GM12878 (cell line): ENCODE measurements at regions of chr13 and their contacts with region 1.

Region 1: GRCh38 chr13:43054803-43055802 is 31.7 kb downstream of the DNAJC15 start:
- DNase-seq: no peak
- ATAC-seq: peak; percentile 56
- H3K4me3 ChIP-seq: peak overlapping the region; percentile 74
- H3K27ac ChIP-seq: peak overlapping the region; percentile 71
- H3K4me1 ChIP-seq: peaks cover 25% of the 10 kb centered on the region
- H3K27me3 ChIP-seq: no peaks in the 10 kb centered on the region
- CTCF ChIP-seq: no peak
- EP300 ChIP-seq: no peak
- POLR2A ChIP-seq: no peak
- RAD21 ChIP-seq: no peak

Region 2: DNA sequence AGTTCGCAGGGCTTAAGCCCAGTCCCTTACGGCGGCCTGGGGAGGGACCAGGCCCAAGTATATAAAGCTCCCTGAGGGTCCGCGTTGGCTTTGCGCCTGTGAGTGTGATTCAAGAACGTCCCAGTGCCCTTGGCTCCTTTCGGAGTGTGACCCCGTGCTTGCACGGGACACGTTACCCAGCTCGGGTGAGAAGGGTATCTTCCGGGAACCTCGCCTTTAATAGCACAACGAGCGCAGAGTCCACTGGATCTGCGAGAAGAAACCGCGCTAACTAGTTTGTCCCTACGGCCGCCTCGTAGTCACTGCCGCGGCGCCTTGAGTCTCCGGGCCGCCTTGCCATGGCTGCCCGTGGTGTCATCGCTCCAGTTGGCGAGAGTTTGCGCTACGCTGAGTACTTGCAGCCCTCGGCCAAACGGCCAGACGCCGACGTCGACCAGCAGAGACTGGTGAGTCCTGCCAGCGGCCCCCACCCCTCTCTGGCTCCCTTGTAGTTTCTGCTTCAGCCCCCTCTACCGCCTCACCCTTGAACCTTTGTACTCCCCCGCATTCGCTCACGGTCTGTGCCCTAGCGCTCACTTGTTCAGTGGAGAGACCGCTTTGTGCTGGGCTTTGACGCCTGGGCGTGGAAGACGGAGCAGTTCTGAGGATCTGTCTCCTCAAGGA is 31.7 kb before region 1 on chr13 and contains the start of gene DNAJC15:
- CTCF ChIA-PET with region 1: interaction called, 7 read pairs
- POLR2A ChIA-PET with region 1: interaction called, 3 read pairs
- RAD21 ChIA-PET with region 1: interaction called, 6 read pairs
- SMC1A ChIA-PET with region 1: interaction called, 14 read pairs
- in situ Hi-C with region 1: no loop called
- intact Hi-C with region 1: no loop called
- DNase-seq: peak; percentile 57
- ATAC-seq: peak; percentile 89
- H3K4me3 ChIP-seq: peak within 1 kb of the TSS; percentile 93
- H3K27ac ChIP-seq: peak within 1 kb of the TSS; percentile 83
- H3K4me1 ChIP-seq: peaks cover 6% of the 10 kb centered on the region
- H3K27me3 ChIP-seq: no peaks in the 10 kb centered on the region
- CTCF ChIP-seq: peak; percentile 22 to 31 (median 30); a peak in 3 of 6 replicates
- EP300 ChIP-seq: no peak
- POLR2A ChIP-seq: peak; percentile 97
- RAD21 ChIP-seq: peak; percentile 25; the same call in 1 of the 2 replicates
- polyA plus RNA-seq, gene DNAJC15: 102 to 104 TPM

Region 3: DNA sequence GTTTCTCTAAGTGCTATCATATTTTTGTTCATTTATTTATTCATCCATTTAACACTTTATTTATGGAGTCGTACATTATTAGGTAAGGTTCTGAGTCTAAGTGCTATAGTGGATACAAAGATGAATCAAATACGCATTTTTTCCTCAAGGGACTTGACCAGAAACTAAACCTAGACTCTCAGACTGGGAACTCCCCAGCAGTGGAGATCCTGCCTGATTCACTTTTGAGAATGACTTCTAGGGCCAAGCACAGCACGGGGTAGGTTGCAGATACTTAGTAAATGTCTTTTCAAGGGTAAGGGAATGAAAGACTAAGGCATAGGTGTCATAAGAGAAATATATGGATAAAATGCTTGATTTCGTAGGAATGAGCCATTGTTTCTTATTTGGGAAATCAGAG is 24.6 kb before region 1 on chr13:
- CTCF ChIA-PET with region 1: no interaction called
- POLR2A ChIA-PET with region 1: interaction called, 3 read pairs
- RAD21 ChIA-PET with region 1: interaction called, 4 read pairs
- SMC1A ChIA-PET with region 1: interaction called, 10 read pairs
- in situ Hi-C with region 1: no loop called
- intact Hi-C with region 1: no loop called
- DNase-seq: peak; percentile 36
- ATAC-seq: peak; percentile 83
- H3K4me3 ChIP-seq: no peak overlapping the region
- H3K27ac ChIP-seq: no peak overlapping the region
- H3K4me1 ChIP-seq: peaks cover 5% of the 10 kb centered on the region; the same call in 1 of the 2 replicates
- H3K27me3 ChIP-seq: no peaks in the 10 kb centered on the region
- CTCF ChIP-seq: no peak
- EP300 ChIP-seq: no peak
- POLR2A ChIP-seq: no peak
- RAD21 ChIP-seq: no peak

Region 4: GRCh38 chr13:43041369-43041921 is 13.7 kb before region 1 on chr13:
- CTCF ChIA-PET with region 1: interaction called, 5 read pairs
- POLR2A ChIA-PET with region 1: interaction called, 5 read pairs
- RAD21 ChIA-PET with region 1: interaction called, 10 read pairs
- SMC1A ChIA-PET with region 1: interaction called, 18 read pairs
- in situ Hi-C with region 1: no loop called
- intact Hi-C with region 1: no loop called
- DNase-seq: no peak
- ATAC-seq: peak; percentile 65
- H3K4me3 ChIP-seq: no peak overlapping the region
- H3K27ac ChIP-seq: peak overlapping the region; percentile 41
- H3K4me1 ChIP-seq: peaks cover 48% of the 10 kb centered on the region
- H3K27me3 ChIP-seq: no peaks in the 10 kb centered on the region
- CTCF ChIP-seq: no peak
- EP300 ChIP-seq: no peak
- POLR2A ChIP-seq: no peak
- RAD21 ChIP-seq: no peak

Region 5: DNA sequence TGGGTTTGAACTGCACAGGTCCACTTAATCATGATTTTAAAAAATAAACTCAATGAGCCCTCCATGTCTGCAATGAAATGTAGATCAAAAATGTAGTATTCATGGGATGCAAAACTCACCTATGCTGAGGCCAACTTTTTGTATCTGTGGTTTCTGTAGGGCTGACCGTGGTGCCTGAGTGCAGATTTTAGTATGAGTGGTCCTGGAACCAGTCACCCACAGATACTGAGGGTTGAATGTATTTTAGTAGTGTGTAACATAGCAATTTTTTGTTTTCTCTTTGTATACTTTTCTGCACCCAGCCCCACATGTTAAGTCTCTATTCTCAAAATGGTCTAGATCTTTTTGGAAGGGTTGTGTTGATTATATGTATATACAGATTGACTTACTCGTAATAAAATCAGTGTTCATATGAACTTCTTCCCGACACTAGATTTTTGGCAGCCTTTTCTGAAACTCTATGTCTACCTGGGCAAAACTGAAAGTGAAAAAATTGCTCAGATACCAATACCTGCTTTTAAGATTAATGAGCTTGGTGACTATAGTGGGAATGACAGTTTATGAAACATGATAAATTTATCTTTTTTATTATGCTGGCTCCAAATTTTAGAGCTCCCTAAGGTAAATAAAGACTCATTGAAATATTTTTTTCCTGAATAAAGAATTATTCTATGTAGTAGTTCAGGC is 19.9 kb after region 1 on chr13:
- CTCF ChIA-PET with region 1: interaction called, 8 read pairs
- POLR2A ChIA-PET with region 1: interaction called, 4 read pairs
- RAD21 ChIA-PET with region 1: interaction called, 4 read pairs
- SMC1A ChIA-PET with region 1: interaction called, 48 read pairs
- in situ Hi-C with region 1: no loop called
- intact Hi-C with region 1: no loop called
- DNase-seq: no peak
- ATAC-seq: peak; percentile 90
- H3K4me3 ChIP-seq: peak overlapping the region; percentile 9; the same call in 1 of the 2 replicates
- H3K27ac ChIP-seq: peak overlapping the region; percentile 60
- H3K4me1 ChIP-seq: peaks cover 36% of the 10 kb centered on the region
- H3K27me3 ChIP-seq: no peaks in the 10 kb centered on the region
- CTCF ChIP-seq: no peak
- EP300 ChIP-seq: peak in 1 of 2 experiments; percentile 56; a peak in 2 of 4 replicates
- POLR2A ChIP-seq: no peak
- RAD21 ChIP-seq: no peak

Region 6: DNA sequence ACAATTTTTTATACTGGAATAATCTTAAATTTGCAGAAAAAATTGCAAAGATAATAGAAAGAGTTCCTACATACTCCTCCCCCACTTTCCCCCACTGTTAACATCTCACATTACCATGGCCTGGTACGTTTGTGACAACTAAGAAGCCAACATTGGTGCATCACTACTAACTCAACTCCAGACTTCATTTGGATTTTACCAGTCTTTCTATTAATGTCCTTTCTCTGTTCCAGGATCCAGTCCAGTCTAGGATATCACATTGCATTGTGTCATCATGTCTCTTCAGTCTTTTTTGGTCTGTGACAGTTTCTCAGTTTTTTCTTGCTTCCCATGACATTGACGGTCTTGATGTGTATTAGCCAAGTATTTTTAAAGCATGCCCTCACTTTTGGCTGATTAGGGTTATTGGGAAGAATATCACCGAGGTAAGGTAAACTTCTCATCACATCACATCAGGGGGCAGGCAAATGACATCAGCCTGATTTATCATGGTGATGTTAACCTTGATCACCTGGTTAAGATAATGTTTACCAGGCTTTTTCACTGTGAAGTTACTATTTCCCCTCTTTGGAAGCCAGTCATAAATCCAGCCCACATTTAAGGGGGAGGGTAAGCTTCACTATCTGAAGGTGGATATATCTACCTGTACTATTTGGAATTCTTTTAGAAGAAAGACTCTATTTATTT is 409.6 kb after region 1 on chr13:
- CTCF ChIA-PET with region 1: no interaction called
- POLR2A ChIA-PET with region 1: no interaction called
- RAD21 ChIA-PET with region 1: no interaction called
- SMC1A ChIA-PET with region 1: no interaction called
- in situ Hi-C with region 1: no loop called
- intact Hi-C with region 1: no loop called
- DNase-seq: no peak
- ATAC-seq: no peak
- H3K4me3 ChIP-seq: no peak overlapping the region
- H3K27ac ChIP-seq: no peak overlapping the region
- H3K4me1 ChIP-seq: no peaks in the 10 kb centered on the region
- H3K27me3 ChIP-seq: peaks cover 0 to 2% of the 10 kb centered on the region in 2 experiments; a peak in 2 of 4 replicates
- CTCF ChIP-seq: no peak
- EP300 ChIP-seq: no peak
- POLR2A ChIP-seq: no peak
- RAD21 ChIP-seq: no peak